ENCODE measurements at regions of chr2 and their contacts with region 1.

Region 1: GRCh38 chr2:70124983-70125480 is 37.8 kb downstream of the PCBP1 start:
- DNase-seq: peak in 2 of 5 donors; percentile 75 to 82
- H3K4me3 ChIP-seq: peak overlapping the region; percentile 29 to 99
- H3K4me3 Mint-ChIP-seq: peak overlapping the region; percentile 89 to 99 (median 94)
- H3K27ac ChIP-seq: peak overlapping the region; percentile 97
- H3K27ac Mint-ChIP-seq: peak overlapping the region; percentile 95 to 100 (median 100)
- H3K4me1 ChIP-seq: peaks cover 64% of the 10 kb centered on the region
- H3K4me1 Mint-ChIP-seq: peaks cover 34 to 73% (median 57%) of the 10 kb centered on the region in 4 donors
- H3K27me3 ChIP-seq: no peaks in the 10 kb centered on the region
- H3K27me3 Mint-ChIP-seq: peaks cover 0 to 3% of the 10 kb centered on the region in 2 donors

Region 2: DNA sequence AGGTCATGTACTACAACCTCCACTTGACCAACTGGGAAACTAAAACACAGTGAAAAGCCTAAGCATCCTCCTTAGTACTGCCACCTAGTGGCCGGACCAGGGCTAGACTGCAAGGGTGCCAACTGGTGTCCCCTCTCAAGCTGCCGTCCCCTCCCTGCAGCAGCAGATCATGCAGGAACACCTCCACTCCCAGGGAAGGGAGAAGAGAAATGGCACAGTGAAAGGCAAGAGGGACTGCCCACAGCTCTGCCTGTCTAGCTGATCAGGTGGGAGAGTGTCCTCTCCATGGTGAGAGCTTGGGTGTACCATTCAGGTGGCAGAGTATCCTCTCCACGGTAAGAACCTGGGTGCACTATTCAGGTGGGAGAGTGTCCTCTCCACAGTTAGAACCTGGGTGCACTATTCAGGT is 559.6 kb before region 1 on chr2:
- CTCF ChIA-PET with region 1: no interaction called
- POLR2A ChIA-PET with region 1: no interaction called
- intact Hi-C with region 1: no loop called
- DNase-seq: peak; percentile 36 to 67 (median 48)
- H3K4me3 ChIP-seq: no peak overlapping the region
- H3K4me3 Mint-ChIP-seq: peak overlapping the region; percentile 52 to 79 (median 70)
- H3K27ac ChIP-seq: peak overlapping the region; percentile 11
- H3K27ac Mint-ChIP-seq: peak overlapping the region; percentile 57 to 90 (median 80)
- H3K4me1 ChIP-seq: peaks cover 96% of the 10 kb centered on the region
- H3K4me1 Mint-ChIP-seq: peaks cover 70 to 99% (median 84%) of the 10 kb centered on the region in 4 donors
- H3K27me3 ChIP-seq: no peaks in the 10 kb centered on the region
- H3K27me3 Mint-ChIP-seq: no peaks in the 10 kb centered on the region

Region 3: DNA sequence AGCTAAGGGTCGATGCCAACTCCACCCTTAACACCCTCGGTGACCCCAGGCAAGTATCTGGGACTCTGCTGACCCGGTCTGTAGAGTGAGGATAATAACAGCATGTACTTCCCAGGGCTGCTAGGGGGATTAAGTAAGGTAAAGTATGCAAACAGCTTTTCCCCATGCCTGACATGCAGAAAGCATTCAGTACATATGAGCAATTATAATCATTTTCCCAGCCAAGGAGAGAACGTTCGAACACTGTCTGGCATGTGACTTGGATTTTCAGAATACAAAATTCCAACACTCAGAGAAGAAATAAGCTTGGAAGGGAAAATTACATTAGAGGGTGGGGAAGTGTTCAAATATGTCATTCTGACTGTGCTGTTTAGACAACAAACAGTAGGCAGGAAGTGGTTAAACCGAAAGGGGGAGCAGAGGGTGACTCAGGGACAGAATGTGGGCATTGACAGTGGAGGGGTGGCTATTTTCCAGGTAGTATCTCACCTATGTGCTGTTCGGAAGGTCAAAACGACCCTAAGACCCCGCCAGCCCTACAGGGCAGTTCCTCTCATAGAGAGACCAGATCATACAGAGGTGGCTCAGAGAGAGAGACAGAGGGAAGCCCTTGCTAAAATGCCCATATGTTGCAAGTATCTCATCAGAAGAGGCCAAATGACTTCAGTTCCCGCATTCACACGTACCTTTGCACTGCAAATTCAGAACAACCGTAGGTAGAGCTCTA is 178.5 kb before region 1 on chr2:
- CTCF ChIA-PET with region 1: no interaction called
- POLR2A ChIA-PET with region 1: interaction called, 13 read pairs
- intact Hi-C with region 1: no loop called
- DNase-seq: peak; percentile 50 to 79 (median 64)
- H3K4me3 ChIP-seq: peak overlapping the region in 1 of 2 donors; percentile 21
- H3K4me3 Mint-ChIP-seq: peak overlapping the region in 7 of 8 donors; percentile 47 to 82 (median 64)
- H3K27ac ChIP-seq: peak overlapping the region; percentile 39
- H3K27ac Mint-ChIP-seq: peak overlapping the region; percentile 87 to 96 (median 90)
- H3K4me1 ChIP-seq: peaks cover 26% of the 10 kb centered on the region
- H3K4me1 Mint-ChIP-seq: peaks cover 24 to 36% (median 31%) of the 10 kb centered on the region in 4 donors
- H3K27me3 ChIP-seq: no peaks in the 10 kb centered on the region
- H3K27me3 Mint-ChIP-seq: no peaks in the 10 kb centered on the region

Region 4: DNA sequence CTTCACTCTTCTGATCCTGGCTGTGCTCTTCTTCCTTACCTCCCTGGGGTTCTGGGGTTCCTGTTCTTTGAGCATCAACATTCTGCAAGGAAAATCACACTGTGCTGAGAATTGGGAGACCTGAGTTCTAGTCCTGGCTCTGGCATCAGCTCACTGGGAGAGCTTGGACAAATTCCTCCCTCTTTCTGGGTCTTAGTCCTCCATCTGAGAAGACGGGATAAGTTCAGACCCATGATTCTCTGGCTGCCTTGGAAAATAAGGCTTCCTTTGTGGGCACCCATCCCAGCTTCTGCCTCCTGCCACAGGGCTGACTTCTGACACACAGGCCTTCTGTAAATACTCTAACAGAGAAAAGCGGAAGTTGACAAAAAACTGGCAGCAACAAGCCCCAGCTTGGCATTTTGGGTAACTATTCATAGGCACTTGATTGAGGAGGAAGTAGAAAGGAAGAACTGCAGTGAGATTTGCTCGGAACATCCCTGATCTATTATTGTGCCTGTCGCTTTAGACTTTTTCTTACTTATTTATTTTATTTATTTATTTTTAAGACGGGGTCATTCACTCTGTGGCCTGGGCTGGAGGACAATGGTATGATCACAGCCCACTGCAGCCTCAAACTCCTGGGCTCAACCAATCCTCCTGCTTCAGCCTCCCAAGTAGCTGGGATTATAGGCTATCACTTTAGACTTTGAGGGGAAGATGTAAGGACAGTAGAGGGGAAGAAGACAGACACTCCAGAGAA is 29.9 kb before region 1 on chr2:
- CTCF ChIA-PET with region 1: interaction called, 33 read pairs
- POLR2A ChIA-PET with region 1: interaction called, 2,231 read pairs
- intact Hi-C with region 1: loop called (anchors 2 kb)
- DNase-seq: peak; percentile 69 to 77 (median 74)
- H3K4me3 ChIP-seq: peak overlapping the region; percentile 2 to 23
- H3K4me3 Mint-ChIP-seq: peak overlapping the region; percentile 78 to 90 (median 84)
- H3K27ac ChIP-seq: peak overlapping the region; percentile 76
- H3K27ac Mint-ChIP-seq: peak overlapping the region; percentile 85 to 100 (median 97)
- H3K4me1 ChIP-seq: peaks cover 44% of the 10 kb centered on the region
- H3K4me1 Mint-ChIP-seq: peaks cover 36 to 55% (median 43%) of the 10 kb centered on the region in 4 donors
- H3K27me3 ChIP-seq: no peaks in the 10 kb centered on the region
- H3K27me3 Mint-ChIP-seq: no peaks in the 10 kb centered on the region

Region 5: DNA sequence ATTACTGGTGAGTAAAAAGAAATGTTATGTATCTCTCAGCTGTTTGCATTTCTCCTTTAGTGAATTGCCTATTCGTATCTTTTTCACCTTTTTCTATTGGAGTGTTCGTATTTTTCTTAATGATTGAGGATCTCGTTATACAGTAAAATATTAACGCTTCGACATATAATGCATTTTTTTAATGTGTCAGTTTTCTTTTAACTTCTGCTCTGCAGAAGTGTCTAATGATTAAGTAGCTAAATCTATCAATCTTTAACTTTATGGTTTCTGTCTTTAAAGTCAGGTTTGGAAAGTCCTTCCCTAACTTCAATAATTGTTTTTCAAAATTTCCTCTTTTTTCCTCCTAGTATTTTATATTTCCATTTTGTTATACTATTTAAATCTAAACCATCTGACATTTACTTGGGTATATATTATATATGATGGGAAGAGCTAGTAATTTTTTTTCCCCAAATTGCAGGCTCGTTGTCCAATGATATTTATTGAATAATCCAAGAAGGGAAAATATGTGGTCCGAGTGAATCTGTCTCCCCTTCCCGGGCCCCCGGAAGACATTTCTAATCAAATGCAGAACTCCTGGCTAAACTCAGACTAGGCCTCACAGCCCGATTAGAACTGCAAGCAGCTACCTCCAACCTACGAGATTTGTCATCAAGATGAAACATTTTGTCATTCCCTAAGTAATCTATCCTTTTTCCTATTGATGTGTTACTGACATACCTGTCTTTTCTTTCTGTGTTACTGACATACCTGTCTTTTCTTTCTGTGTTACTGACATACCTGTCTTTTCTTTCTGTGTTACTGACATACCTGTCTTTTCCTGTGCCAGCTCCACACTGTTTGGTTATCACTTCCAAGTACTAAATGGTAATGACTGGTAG is 20.6 kb before region 1 on chr2:
- CTCF ChIA-PET with region 1: interaction called, 15 read pairs
- POLR2A ChIA-PET with region 1: interaction called, 241 read pairs
- intact Hi-C with region 1: loop called (anchors 1 kb)
- DNase-seq: peak in 2 of 5 donors; percentile 32
- H3K4me3 ChIP-seq: peak overlapping the region in 1 of 2 donors; percentile 23
- H3K4me3 Mint-ChIP-seq: peak overlapping the region; percentile 62 to 82 (median 78)
- H3K27ac ChIP-seq: peak overlapping the region; percentile 57
- H3K27ac Mint-ChIP-seq: peak overlapping the region; percentile 87 to 95 (median 94)
- H3K4me1 ChIP-seq: peaks cover 47% of the 10 kb centered on the region
- H3K4me1 Mint-ChIP-seq: peaks cover 31 to 61% (median 46%) of the 10 kb centered on the region in 4 donors
- H3K27me3 ChIP-seq: no peaks in the 10 kb centered on the region
- H3K27me3 Mint-ChIP-seq: no peaks in the 10 kb centered on the region

Region 6: GRCh38 chr2:70181363-70181956 is 56.4 kb after region 1 on chr2:
- CTCF ChIA-PET with region 1: no interaction called
- POLR2A ChIA-PET with region 1: no interaction called
- intact Hi-C with region 1: no loop called
- DNase-seq: no peak
- H3K4me3 ChIP-seq: no peak overlapping the region
- H3K4me3 Mint-ChIP-seq: no peak overlapping the region
- H3K27ac ChIP-seq: no peak overlapping the region
- H3K27ac Mint-ChIP-seq: peak overlapping the region in 2 of 7 donors; percentile 23 to 29
- H3K4me1 ChIP-seq: no peaks in the 10 kb centered on the region
- H3K4me1 Mint-ChIP-seq: no peaks in the 10 kb centered on the region
- H3K27me3 ChIP-seq: no peaks in the 10 kb centered on the region
- H3K27me3 Mint-ChIP-seq: no peaks in the 10 kb centered on the region